ENCODE measurements at regions of chr1 and their contacts with region 1.

Region 1: DNA sequence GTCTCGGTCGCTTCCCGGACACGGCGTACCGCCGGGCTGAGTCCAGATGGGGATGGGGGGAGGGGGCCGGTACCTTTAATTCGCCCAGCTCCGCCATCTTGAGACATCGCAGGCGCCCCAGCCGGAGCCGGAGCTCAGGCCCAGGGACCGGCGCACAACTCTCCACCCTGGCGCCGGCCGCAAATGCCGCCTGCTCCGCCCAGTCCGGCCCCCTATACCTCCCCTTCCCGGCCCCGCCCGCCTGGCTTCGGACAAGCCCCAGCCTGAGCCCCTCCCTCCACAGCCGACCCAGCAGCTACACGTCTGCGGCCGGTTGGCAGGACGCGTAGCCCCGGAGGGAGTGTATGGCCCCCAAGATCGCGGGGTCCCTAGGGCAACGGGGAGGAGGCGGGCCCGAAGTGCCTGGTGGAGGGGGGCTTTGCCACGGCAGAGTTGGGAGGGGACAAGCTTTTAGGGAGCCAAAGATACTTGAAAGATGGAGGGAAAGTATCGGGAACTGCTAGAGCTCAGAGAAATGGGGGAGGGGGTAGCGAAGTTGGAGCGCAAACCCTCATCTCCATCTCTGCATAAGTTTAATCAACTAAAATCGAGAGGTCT is at the start of gene PIAS3:
- DNase-seq: peak; percentile 97
- H3K4me3 Mint-ChIP-seq: peak within 1 kb of the TSS; percentile 96
- H3K27ac Mint-ChIP-seq: peak within 1 kb of the TSS; percentile 96
- H3K4me1 Mint-ChIP-seq: peaks cover 14% of the 10 kb centered on the region
- H3K27me3 Mint-ChIP-seq: peaks cover 9% of the 10 kb centered on the region
- total RNA-seq, gene PIAS3: 19.1 and 20.2 TPM in 2 replicates

Region 2: DNA sequence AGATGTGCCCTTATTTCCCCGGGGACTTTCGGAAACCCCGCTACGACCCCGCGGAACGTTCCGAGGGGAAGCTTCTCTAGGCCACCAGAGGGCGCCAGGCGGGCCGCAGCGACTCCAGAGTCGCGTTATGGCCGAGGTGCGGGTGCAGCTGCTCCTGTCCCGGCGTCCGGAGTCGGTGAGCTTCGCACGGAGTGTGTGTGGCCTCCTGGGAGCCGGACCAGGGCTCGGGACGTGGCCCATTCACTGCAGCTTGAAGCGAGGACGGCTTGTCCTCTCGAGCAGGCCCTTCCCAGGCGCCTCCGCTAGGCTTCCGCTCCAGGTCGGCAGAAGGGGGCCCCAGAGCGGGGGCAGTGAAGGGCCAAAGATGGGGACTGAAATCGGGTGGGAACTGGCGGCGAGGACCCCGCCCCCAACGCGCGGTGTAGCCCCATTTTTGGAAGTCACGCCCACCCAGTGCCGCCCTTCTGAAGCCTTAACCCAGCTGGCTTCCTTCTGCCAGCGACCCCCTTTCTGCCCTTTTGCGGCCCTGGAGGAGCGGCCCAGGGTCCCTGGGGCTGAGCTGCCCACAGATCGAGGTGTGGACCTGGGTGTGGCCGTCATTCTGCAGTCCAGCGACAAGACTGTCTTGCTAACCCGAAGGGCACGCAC is 13.4 kb before region 1 on chr1 and contains the start of gene NUDT17:
- intact Hi-C with region 1: no loop called
- DNase-seq: peak; percentile 92
- H3K4me3 Mint-ChIP-seq: no peak within 1 kb of the TSS
- H3K27ac Mint-ChIP-seq: no peak within 1 kb of the TSS
- H3K4me1 Mint-ChIP-seq: peaks cover 9% of the 10 kb centered on the region
- H3K27me3 Mint-ChIP-seq: no peaks in the 10 kb centered on the region
- total RNA-seq, gene NUDT17: 2.5 and 3.4 TPM in 2 replicates

Region 3: DNA sequence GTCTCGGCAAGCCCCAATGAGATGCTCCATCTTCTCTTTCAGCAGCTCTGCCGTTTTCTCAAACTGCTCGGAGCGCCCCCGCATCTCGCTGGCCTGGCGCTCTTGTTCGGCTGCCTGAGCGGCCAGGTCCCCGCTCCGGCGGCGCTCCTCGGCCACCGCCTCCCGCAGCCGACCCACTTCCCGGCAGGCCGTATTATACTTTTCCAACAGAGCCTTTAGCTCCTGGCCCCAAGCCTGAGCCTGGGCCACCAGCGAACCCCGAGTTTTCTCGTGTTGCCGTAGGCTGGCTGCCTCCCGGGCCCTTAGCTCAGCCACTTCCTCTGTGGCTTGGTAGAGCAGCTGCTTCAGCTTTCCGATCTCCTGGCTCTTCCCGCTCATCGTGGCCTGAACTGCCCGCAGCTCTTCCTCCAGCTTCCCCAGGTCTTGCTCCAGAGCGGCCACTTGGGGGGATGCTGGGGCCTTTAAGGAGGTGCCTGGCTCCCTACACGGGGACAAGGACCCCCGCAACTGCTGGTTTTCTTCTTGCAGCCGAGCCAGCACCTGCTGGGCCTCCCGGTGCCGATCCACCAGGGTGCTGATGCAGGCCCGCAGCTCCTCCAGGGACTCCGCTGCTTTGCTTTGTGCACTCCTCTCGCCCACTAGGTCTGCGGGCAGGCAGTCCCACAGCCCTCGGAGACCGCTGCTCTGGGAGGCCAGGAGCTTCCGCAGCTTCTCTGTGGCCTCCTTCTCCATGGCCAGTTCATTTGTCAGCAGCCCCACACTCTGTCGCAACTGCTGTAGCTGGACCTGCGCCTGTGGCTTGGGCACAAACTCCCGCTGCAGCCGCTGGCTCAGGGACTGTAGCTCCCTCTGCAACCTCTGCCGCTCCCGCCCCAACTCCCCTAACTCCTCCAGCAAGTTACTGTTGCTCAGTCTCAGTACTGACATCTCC is 13.3 kb after region 1 on chr1:
- intact Hi-C with region 1: loop called (anchors 1 kb)
- DNase-seq: peak; percentile 83
- H3K4me3 Mint-ChIP-seq: peak overlapping the region; percentile 87
- H3K27ac Mint-ChIP-seq: peak overlapping the region; percentile 80
- H3K4me1 Mint-ChIP-seq: peaks cover 14% of the 10 kb centered on the region
- H3K27me3 Mint-ChIP-seq: peaks cover 41% of the 10 kb centered on the region

Region 4: DNA sequence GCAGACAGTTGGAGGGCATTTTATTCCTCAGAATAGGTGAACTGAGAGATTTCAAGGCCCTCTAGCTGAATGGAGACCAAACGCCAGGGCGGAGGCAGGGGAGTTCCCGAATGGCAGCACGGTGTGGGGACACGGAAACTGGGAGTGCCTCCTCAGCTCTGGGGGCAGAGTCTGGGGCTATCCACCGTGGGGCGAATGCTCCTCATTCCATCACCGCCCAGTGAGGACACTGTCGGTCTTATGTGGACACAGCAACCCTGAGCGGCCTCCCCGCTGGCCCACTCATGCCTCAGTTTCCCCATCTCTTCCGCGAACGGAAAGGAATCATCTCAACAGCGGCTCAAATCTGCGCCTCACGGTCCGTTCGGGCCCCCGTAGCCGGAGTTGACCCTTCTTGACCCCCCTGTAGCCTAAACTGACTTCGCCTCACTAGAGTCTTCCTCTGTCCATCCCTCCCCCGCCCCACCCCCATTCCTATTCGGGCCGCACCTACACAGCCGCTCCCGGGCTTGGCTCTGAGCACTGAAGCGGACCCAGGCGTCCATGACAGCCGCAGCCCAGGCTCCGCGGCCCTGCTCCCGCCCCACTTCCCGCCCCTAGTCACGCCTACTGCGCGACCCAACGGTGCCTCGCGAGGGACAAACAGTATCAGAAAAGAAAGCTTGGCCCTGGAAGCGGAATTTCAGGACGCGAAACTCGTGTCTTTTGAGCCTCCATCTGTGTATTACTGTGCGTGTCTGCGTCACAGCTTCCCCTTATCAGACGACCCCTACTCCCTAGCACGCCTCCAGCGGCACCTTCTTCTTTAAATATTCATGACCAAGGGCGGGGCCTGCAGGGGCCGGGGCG is 59.4 kb after region 1 on chr1 and contains the start of gene PEX11B:
- intact Hi-C with region 1: loop called (anchors 1 kb)
- DNase-seq: peak; percentile 97
- H3K4me3 Mint-ChIP-seq: peak within 1 kb of the TSS; percentile 94
- H3K27ac Mint-ChIP-seq: peak within 1 kb of the TSS; percentile 94
- H3K4me1 Mint-ChIP-seq: peaks cover 36% of the 10 kb centered on the region
- H3K27me3 Mint-ChIP-seq: no peaks in the 10 kb centered on the region
- total RNA-seq, gene PEX11B: 31.7 and 32.2 TPM in 2 replicates

Region 5: GRCh38 chr1:145957443-145958319 is 98.7 kb after region 1 on chr1 and contains the start of gene LIX1L:
- intact Hi-C with region 1: loop called (anchors 2 kb)
- DNase-seq: peak; percentile 98
- H3K4me3 Mint-ChIP-seq: peak within 1 kb of the TSS; percentile 87
- H3K27ac Mint-ChIP-seq: peak within 1 kb of the TSS; percentile 92
- H3K4me1 Mint-ChIP-seq: peaks cover 52% of the 10 kb centered on the region
- H3K27me3 Mint-ChIP-seq: no peaks in the 10 kb centered on the region
- total RNA-seq, gene LIX1L: 37.8 and 38.4 TPM in 2 replicates

Region 6: GRCh38 chr1:146036965-146037646 is 178.1 kb after region 1 on chr1:
- intact Hi-C with region 1: loop called (anchors 1 kb)
- DNase-seq: peak; percentile 93
- H3K4me3 Mint-ChIP-seq: peak overlapping the region; percentile 96
- H3K27ac Mint-ChIP-seq: peak overlapping the region; percentile 97
- H3K4me1 Mint-ChIP-seq: peaks cover 46% of the 10 kb centered on the region
- H3K27me3 Mint-ChIP-seq: peaks cover 16% of the 10 kb centered on the region

Measured in activated CD4-positive, alpha-beta T cell treated with anti-CD3 and anti-CD28 coated beads, Interleukin-2, amount 10 ng/mL, durations not matched to agents 24 days and 14 days (primary cell).